Activated CD4-positive, alpha-beta memory T cell treated with anti-CD3 and anti-CD28 coated beads for 36 hours (primary cell): ENCODE measurements at regions of chr1 and their contacts with region 1.

Region 1: GRCh38 chr1:110879758-110880606 is 7.0 kb downstream of the CD53 start:
- DNase-seq: peak; percentile 80
- H3K4me3 Mint-ChIP-seq: peak overlapping the region; percentile 69
- H3K27ac Mint-ChIP-seq: peak overlapping the region; percentile 99
- H3K4me1 Mint-ChIP-seq: peaks cover 62% of the 10 kb centered on the region
- H3K27me3 Mint-ChIP-seq: no peaks in the 10 kb centered on the region

Region 2: DNA sequence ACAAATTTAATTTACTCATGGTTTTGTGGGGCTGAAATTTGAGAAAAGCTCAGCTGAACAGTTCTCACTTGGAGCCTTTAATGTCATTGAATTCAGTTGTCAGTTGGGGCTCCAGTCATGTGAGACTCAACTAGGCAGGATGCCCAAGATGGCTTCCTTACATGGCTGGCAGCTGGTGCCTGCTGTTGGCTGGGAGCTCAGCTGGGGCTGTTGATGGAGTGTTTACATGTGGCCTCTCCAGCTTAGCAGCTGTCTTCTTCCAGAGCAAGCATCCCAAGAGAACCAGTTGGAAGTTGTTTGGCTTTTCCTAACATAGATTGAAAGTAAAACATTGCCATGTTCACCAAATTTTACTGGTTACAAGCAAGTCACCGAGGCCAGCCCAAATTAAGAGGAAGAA is 123.5 kb before region 1 on chr1:
- CTCF ChIA-PET with region 1: no interaction called
- POLR2A ChIA-PET with region 1: no interaction called
- intact Hi-C with region 1: no loop called
- DNase-seq: no peak
- H3K4me3 Mint-ChIP-seq: no peak overlapping the region
- H3K27ac Mint-ChIP-seq: no peak overlapping the region
- H3K4me1 Mint-ChIP-seq: no peaks in the 10 kb centered on the region
- H3K27me3 Mint-ChIP-seq: peaks cover 5% of the 10 kb centered on the region

Region 3: GRCh38 chr1:110787328-110788071 is 92.5 kb before region 1 on chr1:
- CTCF ChIA-PET with region 1: interaction called, 5 read pairs
- POLR2A ChIA-PET with region 1: interaction called, 3 read pairs
- intact Hi-C with region 1: loop called (anchors 5 kb)
- DNase-seq: peak; percentile 38
- H3K4me3 Mint-ChIP-seq: no peak overlapping the region
- H3K27ac Mint-ChIP-seq: peak overlapping the region; percentile 66
- H3K4me1 Mint-ChIP-seq: peaks cover 50% of the 10 kb centered on the region
- H3K27me3 Mint-ChIP-seq: no peaks in the 10 kb centered on the region

Region 4: GRCh38 chr1:111203681-111204200 is 323.8 kb after region 1 on chr1:
- CTCF ChIA-PET with region 1: no interaction called
- POLR2A ChIA-PET with region 1: no interaction called
- intact Hi-C with region 1: loop called (anchors 5 kb)
- DNase-seq: peak; percentile 93
- H3K4me3 Mint-ChIP-seq: peak overlapping the region; percentile 92
- H3K27ac Mint-ChIP-seq: peak overlapping the region; percentile 97
- H3K4me1 Mint-ChIP-seq: peaks cover 38% of the 10 kb centered on the region
- H3K27me3 Mint-ChIP-seq: no peaks in the 10 kb centered on the region

Region 5: DNA sequence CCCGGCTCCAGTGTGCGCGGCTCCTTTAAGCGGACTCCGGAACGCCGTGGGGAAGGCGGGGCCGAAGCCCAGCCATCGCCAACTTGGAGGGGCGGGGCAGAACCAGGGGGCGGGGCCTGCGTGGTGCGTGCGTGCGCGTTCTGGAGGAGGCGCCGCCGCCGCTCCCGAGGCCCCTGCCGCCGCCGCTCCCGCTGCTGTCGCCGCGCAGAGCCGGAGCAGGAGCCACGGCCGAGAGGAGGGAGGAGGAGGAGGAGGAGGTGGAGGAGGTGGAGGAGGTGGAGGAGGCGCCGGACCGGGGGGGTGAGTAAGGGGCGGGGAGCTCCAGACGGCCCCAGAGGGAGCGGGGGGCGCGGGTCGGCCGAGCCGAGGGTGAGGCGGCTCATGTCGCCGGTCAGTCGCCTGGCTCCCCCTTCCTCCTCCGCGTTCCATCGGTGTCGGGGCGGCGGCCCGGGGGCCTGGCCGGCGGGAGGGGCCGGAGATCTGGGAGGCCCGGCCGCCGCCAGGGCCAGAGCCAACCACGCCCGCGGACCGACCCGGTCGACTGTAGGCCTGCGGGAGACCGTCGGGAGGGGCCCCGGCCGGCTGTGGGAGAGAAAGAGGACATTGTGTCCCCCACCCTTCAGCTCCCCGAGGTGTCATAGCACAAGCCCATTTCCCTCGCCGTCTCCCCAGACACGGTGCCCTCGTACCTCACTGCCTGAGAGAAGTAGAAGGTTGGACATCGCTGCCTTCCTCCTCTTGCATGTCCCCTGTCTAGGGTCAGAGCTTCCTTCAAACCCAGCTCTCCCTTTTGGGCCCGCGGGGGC is 739.9 kb after region 1 on chr1 and contains the start of gene RAP1A:
- CTCF ChIA-PET with region 1: no interaction called
- POLR2A ChIA-PET with region 1: interaction called, 3 read pairs
- intact Hi-C with region 1: loop called (anchors 5 kb)
- DNase-seq: peak; percentile 97
- H3K4me3 Mint-ChIP-seq: peak within 1 kb of the TSS; percentile 95
- H3K27ac Mint-ChIP-seq: peak within 1 kb of the TSS; percentile 97
- H3K4me1 Mint-ChIP-seq: peaks cover 65% of the 10 kb centered on the region
- H3K27me3 Mint-ChIP-seq: no peaks in the 10 kb centered on the region
- total RNA-seq, gene RAP1A: 292 to 294 TPM